ENCODE measurements at regions of chr3 and their contacts with region 1.

Region 1: DNA sequence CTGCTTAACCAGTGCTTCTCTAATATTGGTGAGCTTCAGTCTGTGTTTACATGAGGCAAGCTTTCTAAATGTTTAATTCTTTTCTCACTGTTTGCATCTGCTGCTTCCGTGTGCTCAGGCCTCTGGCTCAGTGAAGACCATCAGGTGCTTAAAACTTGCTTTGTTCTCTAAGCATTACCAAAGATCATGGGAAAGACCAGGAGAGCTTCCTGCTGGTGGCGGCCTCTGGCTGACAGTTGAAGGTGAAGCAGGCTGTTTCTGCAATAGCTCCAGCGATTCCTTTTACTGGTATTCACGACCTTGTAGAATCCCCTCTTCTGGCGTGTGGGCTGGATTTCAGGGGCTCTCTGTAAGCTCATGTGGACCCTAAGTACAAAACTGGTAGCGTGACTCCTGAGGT is 45.1 kb downstream of the EDEM1 start:
- DNase-seq: peak; percentile 32
- ATAC-seq: peak; percentile 84
- H3K4me3 Mint-ChIP-seq: no peak overlapping the region
- H3K27ac Mint-ChIP-seq: no peak overlapping the region
- H3K4me1 Mint-ChIP-seq: peaks cover 14% of the 10 kb centered on the region
- H3K27me3 Mint-ChIP-seq: peaks cover under 1% of the 10 kb centered on the region; the same call in 1 of the 2 replicates
- CTCF ChIP-seq: no peak

Region 2: DNA sequence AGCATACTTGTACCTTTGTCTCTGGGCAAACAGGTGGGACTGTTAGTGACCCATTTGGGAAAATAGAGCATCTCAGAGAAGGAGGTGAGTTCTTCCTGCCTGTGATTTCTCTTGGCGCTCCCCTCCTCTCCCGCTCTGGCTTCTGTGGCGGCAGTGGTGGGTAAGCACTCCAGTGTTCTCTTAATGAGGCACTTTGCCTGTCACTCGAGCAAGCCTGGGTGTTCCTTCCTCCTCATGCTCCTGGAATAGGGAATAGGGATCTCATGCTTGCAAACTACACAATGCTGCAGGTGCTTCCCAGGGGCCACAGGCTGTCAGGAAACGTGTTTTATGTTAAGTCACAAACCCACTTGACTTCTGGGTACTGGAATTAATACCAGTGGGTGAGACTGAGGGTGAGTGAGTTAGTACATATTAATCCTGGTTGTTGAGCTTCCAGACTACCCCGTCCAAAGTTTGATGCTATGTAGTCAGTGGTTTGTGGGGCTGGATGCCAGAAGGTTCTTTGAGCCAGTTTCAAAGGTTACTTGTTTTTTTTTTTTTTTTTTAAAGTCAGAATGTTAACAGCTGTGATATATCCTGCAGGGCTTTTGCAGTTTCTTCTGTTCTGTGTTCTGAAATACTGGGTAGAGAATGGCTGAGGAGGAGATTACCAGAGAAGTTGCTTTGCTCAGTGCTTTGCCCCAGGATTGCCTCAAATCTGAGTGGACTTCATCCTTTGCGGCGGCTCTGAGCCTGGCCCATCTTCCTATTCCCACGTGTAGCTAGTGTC is 14.6 kb before region 1 on chr3:
- CTCF ChIA-PET with region 1: interaction called, 15 read pairs
- POLR2A ChIA-PET with region 1: interaction called, 4 read pairs
- DNase-seq: no peak
- ATAC-seq: no peak
- H3K4me3 Mint-ChIP-seq: no peak overlapping the region
- H3K27ac Mint-ChIP-seq: peak overlapping the region; percentile 72
- H3K4me1 Mint-ChIP-seq: peaks cover 77% of the 10 kb centered on the region
- H3K27me3 Mint-ChIP-seq: no peaks in the 10 kb centered on the region
- CTCF ChIP-seq: no peak

Region 3: GRCh38 chr3:5275529-5275928 is 43.0 kb after region 1 on chr3:
- CTCF ChIA-PET with region 1: no interaction called
- POLR2A ChIA-PET with region 1: no interaction called
- DNase-seq: no peak
- ATAC-seq: no peak
- H3K4me3 Mint-ChIP-seq: no peak overlapping the region
- H3K27ac Mint-ChIP-seq: no peak overlapping the region
- H3K4me1 Mint-ChIP-seq: no peaks in the 10 kb centered on the region
- H3K27me3 Mint-ChIP-seq: 0 out of 2 replicates have a peak, but pooled peaks cover 3% of the 10 kb centered on the region
- CTCF ChIP-seq: no peak

Region 4: GRCh38 chr3:5479229-5479799 is 246.7 kb after region 1 on chr3:
- CTCF ChIA-PET with region 1: no interaction called
- POLR2A ChIA-PET with region 1: no interaction called
- DNase-seq: no peak
- ATAC-seq: no peak
- H3K4me3 Mint-ChIP-seq: no peak overlapping the region
- H3K27ac Mint-ChIP-seq: no peak overlapping the region
- H3K4me1 Mint-ChIP-seq: no peaks in the 10 kb centered on the region
- H3K27me3 Mint-ChIP-seq: peaks cover 2% of the 10 kb centered on the region; the same call in 1 of the 2 replicates
- CTCF ChIP-seq: no peak

Measured in WTC11 (cell line).